ENCODE measurements at regions of chr17 and their contacts with region 1.

Region 1: GRCh38 chr17:12365805-12366204 is 299.9 kb upstream of the MYOCD start:
- DNase-seq: no peak
- H3K4me3 ChIP-seq: no peak overlapping the region
- H3K27ac ChIP-seq: no peak overlapping the region
- H3K4me1 ChIP-seq: no peaks in the 10 kb centered on the region
- H3K27me3 ChIP-seq: no peaks in the 10 kb centered on the region
- CTCF ChIP-seq: no peak
- POLR2A ChIP-seq: no peak

Region 2: DNA sequence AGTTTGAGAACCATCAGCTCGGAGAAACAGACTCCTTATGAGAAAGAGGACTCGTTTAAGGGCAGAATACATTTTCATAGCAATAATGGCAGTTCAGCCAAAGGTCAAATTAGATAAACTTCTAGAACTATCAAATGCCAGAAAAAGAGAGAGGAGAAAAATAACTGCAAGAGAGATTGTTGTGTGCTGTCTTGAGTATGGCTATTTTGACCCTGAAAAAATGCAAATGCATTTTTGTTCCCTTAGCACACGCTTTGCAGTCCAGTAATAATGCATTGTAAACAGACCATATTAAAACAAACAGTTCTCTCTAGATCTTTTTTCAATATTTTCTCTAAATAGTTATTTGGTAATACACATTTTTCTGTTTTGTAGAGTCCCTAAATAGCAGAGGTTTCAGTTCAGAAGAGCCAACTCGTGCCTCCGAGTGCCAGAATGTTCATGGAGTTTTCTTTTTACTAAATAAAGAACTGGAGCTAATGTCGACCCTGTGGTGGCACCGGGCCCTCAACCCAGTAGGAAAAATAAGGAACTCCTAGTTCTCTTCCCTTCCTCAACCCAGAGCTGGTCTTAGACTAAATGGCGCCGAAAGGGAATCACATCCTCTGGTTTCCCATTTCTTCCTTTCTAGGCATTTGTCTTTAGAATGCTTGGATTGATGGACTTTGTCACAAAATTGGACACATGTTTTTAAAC is 47.1 kb before region 1 on chr17:
- intact Hi-C with region 1: loop called (anchors 10 kb)
- DNase-seq: no peak
- H3K4me3 ChIP-seq: no peak overlapping the region
- H3K27ac ChIP-seq: no peak overlapping the region
- H3K4me1 ChIP-seq: no peaks in the 10 kb centered on the region
- H3K27me3 ChIP-seq: no peaks in the 10 kb centered on the region
- CTCF ChIP-seq: no peak
- POLR2A ChIP-seq: no peak